Heart left ventricle (tissue), 16 donors: ENCODE measurements at regions of chr14 and their contacts with region 1.

Region 1: DNA sequence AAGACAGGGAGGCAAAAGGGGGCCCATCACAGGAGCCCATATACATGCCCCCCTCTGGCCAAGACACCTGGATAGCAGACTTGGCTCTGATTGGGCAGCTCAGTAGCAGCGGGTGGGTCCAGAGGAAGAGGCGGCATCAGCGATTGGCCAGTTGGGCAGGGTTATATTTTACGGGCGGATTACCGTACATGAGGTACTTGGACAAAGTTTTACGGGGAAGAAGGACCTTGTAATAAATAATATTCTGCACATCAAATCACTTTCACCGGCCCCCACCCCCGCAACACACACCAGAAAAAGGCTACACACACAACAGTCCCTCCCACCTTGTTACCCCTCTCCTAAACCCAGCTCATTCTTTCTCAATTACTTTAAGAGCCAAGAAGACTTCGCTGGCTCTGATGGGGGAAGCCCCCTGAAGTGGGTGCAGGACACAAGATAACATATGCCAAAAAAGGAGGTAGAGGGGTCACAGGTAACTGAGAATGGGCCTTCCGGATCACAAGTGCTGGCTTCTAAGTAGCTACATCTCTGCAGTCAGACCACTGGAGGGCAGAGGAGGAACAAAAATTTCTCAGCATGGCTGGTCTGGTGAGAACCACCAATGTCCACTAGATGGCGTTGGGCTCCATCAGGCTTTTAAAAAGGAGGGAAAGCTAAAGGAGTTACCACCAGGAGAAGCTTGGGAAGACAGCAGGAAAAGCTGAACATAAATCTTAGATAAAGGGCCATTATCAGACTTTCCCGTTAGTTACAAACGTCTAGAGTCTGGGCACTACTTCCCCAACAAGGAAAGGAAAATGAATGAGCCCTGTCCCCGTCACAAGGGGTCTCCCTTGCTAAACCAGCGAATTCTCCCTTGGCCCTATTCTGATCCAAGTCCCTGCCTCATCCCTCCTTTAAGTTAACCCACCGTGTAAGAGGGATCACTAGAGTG is 11.4 kb upstream of the CDH24 start:
- DNase-seq: peak in 4 of 5 donors; percentile 70 to 83 (median 75)
- ATAC-seq: peak; percentile 35 to 68 (median 65)
- H3K4me3 ChIP-seq: no peak overlapping the region
- H3K27ac ChIP-seq: peak overlapping the region in 2 of 12 donors; percentile 10 to 29
- H3K4me1 ChIP-seq: peaks cover 5 to 45% (median 30%) of the 10 kb centered on the region in 12 donors
- H3K27me3 ChIP-seq: no peaks in the 10 kb centered on the region
- CTCF ChIP-seq: peak; percentile 93 to 99 (median 96)
- POLR2A ChIP-seq: no peak

Region 2: GRCh38 chr14:21768116-21768874 is 1300.4 kb before region 1 on chr14:
- intact Hi-C with region 1: no loop called
- DNase-seq: no peak
- ATAC-seq: no peak
- H3K4me3 ChIP-seq: no peak overlapping the region
- H3K27ac ChIP-seq: no peak overlapping the region
- H3K4me1 ChIP-seq: no peaks in the 10 kb centered on the region
- H3K27me3 ChIP-seq: no peaks in the 10 kb centered on the region
- CTCF ChIP-seq: peak in 7 of 12 donors; percentile 4 to 34 (median 17)
- POLR2A ChIP-seq: no peak

Region 3: DNA sequence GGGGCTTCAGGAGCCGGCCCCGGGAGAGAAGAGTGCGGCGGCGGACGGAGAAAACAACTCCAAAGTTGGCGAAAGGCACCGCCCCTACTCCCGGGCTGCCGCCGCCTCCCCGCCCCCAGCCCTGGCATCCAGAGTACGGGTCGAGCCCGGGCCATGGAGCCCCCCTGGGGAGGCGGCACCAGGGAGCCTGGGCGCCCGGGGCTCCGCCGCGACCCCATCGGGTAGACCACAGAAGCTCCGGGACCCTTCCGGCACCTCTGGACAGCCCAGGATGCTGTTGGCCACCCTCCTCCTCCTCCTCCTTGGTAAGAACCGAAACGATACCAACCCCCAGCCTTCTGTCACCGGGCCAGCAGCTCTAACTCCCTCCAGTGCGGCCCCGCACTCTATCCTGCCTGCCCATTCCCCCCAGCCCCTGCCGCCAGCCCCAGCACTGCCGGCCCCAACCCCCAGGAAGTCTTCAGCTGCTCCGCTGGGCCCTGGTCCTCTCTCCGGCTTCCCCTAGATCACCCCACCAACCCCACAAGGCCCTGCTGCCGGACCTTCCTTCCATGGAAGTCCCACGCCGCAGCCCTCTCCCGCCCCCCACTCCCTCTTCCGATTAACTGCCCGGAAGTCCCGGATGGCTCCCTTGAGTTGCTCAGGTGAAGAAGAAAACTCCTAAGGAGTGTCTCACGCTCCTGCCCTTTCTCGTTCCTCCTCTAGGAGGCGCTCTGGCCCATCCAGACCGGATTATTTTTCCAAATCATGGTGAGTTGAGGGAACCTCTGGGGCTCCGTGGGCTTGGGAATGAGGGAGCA is 196.5 kb before region 1 on chr14:
- intact Hi-C with region 1: no loop called
- DNase-seq: peak; percentile 70 to 80 (median 76)
- ATAC-seq: peak; percentile 6 to 60 (median 51)
- H3K4me3 ChIP-seq: peak overlapping the region; percentile 66 to 100 (median 95)
- H3K27ac ChIP-seq: peak overlapping the region; percentile 90 to 100 (median 98)
- H3K4me1 ChIP-seq: peaks cover 4 to 32% (median 18%) of the 10 kb centered on the region in 12 donors
- H3K27me3 ChIP-seq: no peaks in the 10 kb centered on the region
- CTCF ChIP-seq: peak; percentile 85 to 95 (median 89)
- POLR2A ChIP-seq: no peak

Region 4: DNA sequence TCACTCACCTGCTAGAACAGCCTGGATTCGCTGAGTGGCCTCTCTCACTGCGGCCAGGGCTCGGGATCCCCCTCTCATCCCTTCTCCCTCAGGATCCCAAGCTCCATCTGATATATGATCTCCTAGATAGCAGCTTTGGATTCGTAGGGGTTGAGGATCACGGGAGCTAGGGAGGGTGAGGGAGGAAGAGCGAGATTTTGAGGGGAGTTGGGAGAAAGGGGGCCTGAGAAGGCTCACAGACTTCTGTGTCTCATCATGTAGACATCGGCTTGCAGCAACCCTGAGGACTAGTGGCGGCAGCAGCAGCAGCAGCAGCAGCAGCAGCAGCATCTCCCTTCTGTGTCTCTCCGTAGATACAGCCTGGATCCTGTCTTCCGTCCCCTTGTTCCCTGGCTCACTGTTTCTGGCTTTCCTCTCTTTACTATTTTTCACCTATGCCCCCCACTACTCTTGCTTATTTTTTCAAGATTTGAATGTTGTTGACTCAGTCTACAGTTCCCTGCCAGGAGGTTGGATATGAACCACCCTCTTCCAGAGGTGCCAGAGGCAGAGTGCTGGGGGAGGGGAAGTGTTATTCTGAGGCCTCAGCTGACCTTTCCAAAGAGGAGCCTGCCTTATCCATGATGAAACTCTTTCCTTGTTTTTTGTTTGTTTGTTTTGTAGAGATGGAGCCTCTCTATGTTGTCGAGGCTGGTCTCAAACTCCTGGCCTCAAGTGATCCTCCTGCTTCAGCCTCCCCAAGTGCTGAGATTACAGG is 36.0 kb after region 1 on chr14 and contains the start of gene CIROP:
- intact Hi-C with region 1: loop called in 4 of 10 experiments (anchors 2 to 5 kb)
- DNase-seq: no peak
- ATAC-seq: no peak
- H3K4me3 ChIP-seq: no peak within 1 kb of the TSS
- H3K27ac ChIP-seq: no peak within 1 kb of the TSS
- H3K4me1 ChIP-seq: peaks cover 0 to 4% (median 0%) of the 10 kb centered on the region in 12 donors
- H3K27me3 ChIP-seq: no peaks in the 10 kb centered on the region
- CTCF ChIP-seq: no peak
- POLR2A ChIP-seq: no peak
- total RNA-seq, gene CIROP: not detected

Region 5: DNA sequence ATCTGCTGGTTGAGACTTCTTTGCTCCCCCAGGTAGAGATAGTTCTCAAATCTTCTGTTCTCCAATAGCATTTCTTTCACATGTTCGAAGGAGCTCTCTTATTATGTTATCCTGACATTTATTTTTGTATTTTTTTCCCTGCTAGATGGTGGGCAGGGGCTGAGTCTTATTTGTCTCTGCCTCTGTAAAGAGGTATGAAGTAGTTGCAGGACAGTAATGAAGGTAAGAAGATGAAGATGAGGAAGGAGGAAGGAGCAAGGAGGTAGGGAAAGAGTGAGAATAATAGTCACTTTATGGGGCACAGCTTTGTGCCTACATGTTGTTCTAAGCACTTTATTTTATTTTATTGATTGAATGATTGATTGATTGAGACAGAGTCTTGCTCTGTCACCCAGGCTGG is 41.0 kb after region 1 on chr14:
- intact Hi-C with region 1: loop called in 6 of 10 experiments (anchors 2 to 5 kb)
- DNase-seq: no peak
- ATAC-seq: no peak
- H3K4me3 ChIP-seq: no peak overlapping the region
- H3K27ac ChIP-seq: no peak overlapping the region
- H3K4me1 ChIP-seq: peaks cover 0 to 22% (median 0%) of the 10 kb centered on the region in 12 donors
- H3K27me3 ChIP-seq: peaks cover 0 to 12% (median 0%) of the 10 kb centered on the region in 9 donors
- CTCF ChIP-seq: no peak
- POLR2A ChIP-seq: no peak

Region 6: DNA sequence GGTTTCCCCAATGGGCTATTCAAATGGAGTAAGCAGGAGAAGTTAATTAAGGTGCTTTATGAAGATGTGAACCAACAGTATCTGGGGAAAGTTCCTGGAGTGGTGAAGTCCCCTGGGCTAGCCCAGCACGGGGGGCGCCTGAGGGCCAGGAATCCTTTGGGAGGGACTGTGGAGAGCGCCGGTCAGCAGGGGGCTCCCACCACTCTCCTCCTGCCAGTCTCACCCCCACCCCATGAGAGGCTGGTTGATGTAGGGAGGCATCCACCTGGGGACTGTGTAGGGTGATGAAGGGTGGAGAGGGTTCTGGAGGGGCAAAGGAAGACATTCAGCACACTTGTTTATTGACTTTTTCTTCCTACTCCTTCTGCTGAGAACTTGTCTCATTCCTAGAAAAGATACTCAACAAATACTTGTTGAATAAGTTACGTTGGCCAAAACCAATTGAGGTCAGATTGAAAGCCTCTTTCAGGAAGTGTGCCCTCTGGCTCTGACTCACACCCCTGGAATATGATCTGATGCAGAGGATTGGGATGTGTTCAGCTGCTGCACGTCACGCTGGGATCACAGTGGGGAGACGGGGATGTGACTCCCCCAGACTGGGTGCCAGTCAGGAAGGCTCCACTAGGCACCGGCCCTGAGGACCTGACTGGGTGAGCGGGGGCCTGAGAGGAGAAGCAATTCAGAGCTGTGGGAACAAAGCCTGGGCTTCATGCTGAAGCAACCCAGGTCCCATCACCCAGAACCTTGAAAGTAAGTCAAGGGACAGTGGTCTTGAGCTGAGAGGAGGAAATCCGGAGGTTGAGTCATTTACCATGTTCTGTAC is 46.1 kb after region 1 on chr14:
- intact Hi-C with region 1: loop called in 2 of 10 experiments (anchors 5 kb)
- DNase-seq: no peak
- ATAC-seq: peak in 2 of 4 donors; percentile 8 to 21
- H3K4me3 ChIP-seq: no peak overlapping the region
- H3K27ac ChIP-seq: no peak overlapping the region
- H3K4me1 ChIP-seq: peaks cover 0 to 36% (median 0%) of the 10 kb centered on the region in 12 donors
- H3K27me3 ChIP-seq: peaks cover 0 to 15% (median 0%) of the 10 kb centered on the region in 9 donors
- CTCF ChIP-seq: no peak
- POLR2A ChIP-seq: no peak